ENCODE measurements at regions of chr3 and their contacts with region 1.

Region 1: GRCh38 chr3:179660872-179661271 is 8.0 kb downstream of the USP13 start:
- DNase-seq: no peak
- ATAC-seq: no peak
- H3K4me3 ChIP-seq: no peak overlapping the region
- H3K27ac ChIP-seq: no peak overlapping the region
- H3K4me1 ChIP-seq: no peaks in the 10 kb centered on the region
- H3K27me3 ChIP-seq: no peaks in the 10 kb centered on the region
- CTCF ChIP-seq: no peak
- POLR2A ChIP-seq: no peak
- RAD21 ChIP-seq: no peak

Region 2: DNA sequence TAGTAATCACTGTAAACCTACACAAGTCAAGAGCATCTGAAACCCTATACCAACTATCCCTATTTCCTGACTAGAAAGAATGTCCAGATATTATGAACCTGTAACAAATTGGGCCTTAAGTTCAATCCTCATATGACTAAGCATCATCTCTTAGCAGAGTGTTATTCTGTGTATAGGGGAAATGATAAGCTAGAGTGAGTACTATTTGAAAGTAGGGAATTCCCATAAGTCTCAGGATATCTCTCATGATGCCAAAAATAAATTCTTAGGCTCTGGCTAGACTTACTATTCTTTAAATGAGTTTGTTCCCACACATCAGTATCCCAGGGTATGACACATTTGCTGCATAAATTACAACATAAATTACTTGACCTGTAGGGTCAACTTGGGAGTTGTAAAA is 71.7 kb before region 1 on chr3:
- CTCF ChIA-PET with region 1: no interaction called
- POLR2A ChIA-PET with region 1: no interaction called
- dilution Hi-C with region 1: no loop called
- in situ Hi-C with region 1: no loop called
- intact Hi-C with region 1: no loop called
- DNase-seq: peak; percentile 73
- ATAC-seq: no peak
- H3K4me3 ChIP-seq: no peak overlapping the region
- H3K27ac ChIP-seq: no peak overlapping the region
- H3K4me1 ChIP-seq: peaks cover 2% of the 10 kb centered on the region; the same call in 1 of the 2 replicates
- H3K27me3 ChIP-seq: no peaks in the 10 kb centered on the region
- CTCF ChIP-seq: no peak
- POLR2A ChIP-seq: no peak
- RAD21 ChIP-seq: no peak

Region 3: GRCh38 chr3:180026997-180027396 is 366.1 kb after region 1 on chr3:
- CTCF ChIA-PET with region 1: interaction called, 11 read pairs
- POLR2A ChIA-PET with region 1: no interaction called
- dilution Hi-C with region 1: no loop called
- in situ Hi-C with region 1: no loop called
- intact Hi-C with region 1: no loop called
- DNase-seq: no peak
- ATAC-seq: no peak
- H3K4me3 ChIP-seq: no peak overlapping the region
- H3K27ac ChIP-seq: no peak overlapping the region
- H3K4me1 ChIP-seq: no peaks in the 10 kb centered on the region
- H3K27me3 ChIP-seq: no peaks in the 10 kb centered on the region
- CTCF ChIP-seq: no peak
- POLR2A ChIP-seq: no peak
- RAD21 ChIP-seq: no peak

Measured in IMR-90 (cell line).